Activated CD4-positive, alpha-beta T cell treated with anti-CD3 and anti-CD28 coated beads, Interleukin-2, amount 10 ng/mL, durations not matched to agents 7 days and 5 days (primary cell): ENCODE measurements at regions of chr2 and their contacts with region 1.

Region 1: DNA sequence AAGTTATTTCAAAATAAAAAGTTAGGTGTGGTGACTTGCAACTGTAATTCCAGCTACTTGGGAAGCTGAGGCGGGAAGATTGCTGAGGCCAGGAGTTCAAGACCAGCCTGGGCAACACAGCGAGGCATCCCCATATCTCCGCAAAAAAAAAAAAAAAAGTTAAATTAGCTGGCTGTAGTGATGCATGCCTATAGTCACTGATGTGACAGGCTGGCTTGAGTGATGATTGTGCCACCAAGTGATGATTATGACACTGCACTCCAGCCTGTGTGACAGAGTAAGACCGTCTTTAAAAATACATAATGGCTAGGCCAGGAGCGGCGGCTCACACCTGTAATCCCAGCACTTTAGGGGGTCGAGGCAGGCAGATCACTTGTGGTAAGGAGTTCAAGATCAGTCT is 11.5 kb downstream of the SMPD4 start:
- DNase-seq: no peak
- H3K4me3 Mint-ChIP-seq: no peak overlapping the region
- H3K27ac Mint-ChIP-seq: peak overlapping the region; percentile 31
- H3K4me1 Mint-ChIP-seq: peaks cover 16% of the 10 kb centered on the region
- H3K27me3 Mint-ChIP-seq: no peaks in the 10 kb centered on the region

Region 2: DNA sequence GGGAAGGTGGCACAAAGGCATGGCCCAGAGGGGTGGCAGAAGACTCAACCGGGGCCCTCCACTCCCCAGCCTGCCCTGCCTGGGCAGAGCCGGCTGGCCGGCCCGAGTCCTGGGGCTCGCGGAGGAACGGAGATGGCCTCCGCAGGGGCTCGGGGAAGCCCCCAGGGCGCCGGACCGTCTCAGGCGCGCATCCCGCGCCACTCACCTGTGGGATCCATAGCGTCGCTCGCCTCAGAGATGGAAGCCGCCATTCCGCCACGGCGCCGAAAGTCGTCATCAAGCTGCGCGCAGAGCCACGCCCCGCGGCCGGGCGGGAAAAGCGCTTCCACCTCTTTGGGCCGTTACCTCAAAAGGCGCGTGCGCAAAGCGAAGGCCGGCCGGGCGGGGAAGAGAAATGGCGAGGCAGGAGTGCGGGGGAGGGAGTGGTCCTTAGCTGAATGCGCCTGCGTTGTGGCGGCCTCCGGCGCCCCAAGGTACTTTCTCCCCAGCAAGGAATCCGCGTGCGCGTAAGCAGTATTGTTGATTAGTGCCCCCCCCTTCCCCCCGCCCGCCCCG is 11.5 kb after region 1 on chr2 and contains the start of gene SMPD4:
- CTCF ChIA-PET with region 1: interaction called, 27 read pairs
- POLR2A ChIA-PET with region 1: no interaction called
- DNase-seq: peak; percentile 96
- H3K4me3 Mint-ChIP-seq: peak within 1 kb of the TSS; percentile 91
- H3K27ac Mint-ChIP-seq: peak within 1 kb of the TSS; percentile 99
- H3K4me1 Mint-ChIP-seq: peaks cover 28% of the 10 kb centered on the region
- H3K27me3 Mint-ChIP-seq: no peaks in the 10 kb centered on the region
- total RNA-seq, gene SMPD4: 70.9 to 71.3 TPM

Region 3: GRCh38 chr2:130231656-130232055 is 61.8 kb after region 1 on chr2:
- CTCF ChIA-PET with region 1: no interaction called
- POLR2A ChIA-PET with region 1: no interaction called
- DNase-seq: no peak
- H3K4me3 Mint-ChIP-seq: no peak overlapping the region
- H3K27ac Mint-ChIP-seq: no peak overlapping the region
- H3K4me1 Mint-ChIP-seq: no peaks in the 10 kb centered on the region
- H3K27me3 Mint-ChIP-seq: peaks cover 6% of the 10 kb centered on the region

Region 4: DNA sequence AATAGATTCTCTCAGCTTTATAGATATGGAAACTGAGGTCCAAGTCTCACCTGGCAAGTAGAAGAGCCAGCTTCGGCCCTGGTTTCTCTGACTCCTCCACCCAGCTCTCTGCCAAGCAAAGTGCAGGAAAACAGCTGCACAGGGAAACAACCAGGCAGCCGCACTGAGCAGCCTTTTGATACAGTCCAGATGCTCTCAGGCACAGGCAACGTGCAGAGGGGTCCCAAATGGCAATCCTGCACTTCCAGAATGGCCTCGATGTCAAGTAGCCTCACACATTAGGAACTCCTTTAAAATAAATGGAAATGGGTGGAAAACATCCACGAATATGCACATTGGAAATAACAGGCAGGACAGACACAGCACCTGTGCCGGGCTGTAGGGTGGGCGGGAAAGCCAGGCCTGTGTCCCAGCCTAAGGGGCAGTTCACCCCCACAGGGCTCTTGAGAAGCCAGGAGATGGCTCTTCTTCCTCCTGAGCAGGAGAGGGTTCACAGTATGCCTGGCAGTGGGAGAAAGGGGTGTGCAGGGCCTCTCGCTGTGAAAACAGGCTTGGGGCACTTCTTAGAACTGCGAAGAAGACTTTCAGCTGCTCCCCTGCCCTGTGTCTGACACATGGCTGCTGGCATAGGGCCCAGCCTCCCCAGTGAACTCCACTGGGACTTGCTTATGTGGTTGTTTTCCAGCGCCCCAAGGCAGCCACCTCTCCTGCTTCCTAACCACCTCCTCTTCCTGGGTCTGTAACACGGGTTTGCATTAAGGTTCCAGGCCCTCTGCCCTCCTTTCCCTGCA is 92.3 kb after region 1 on chr2:
- CTCF ChIA-PET with region 1: no interaction called
- POLR2A ChIA-PET with region 1: no interaction called
- DNase-seq: no peak
- H3K4me3 Mint-ChIP-seq: no peak overlapping the region
- H3K27ac Mint-ChIP-seq: no peak overlapping the region
- H3K4me1 Mint-ChIP-seq: no peaks in the 10 kb centered on the region
- H3K27me3 Mint-ChIP-seq: peaks cover 14% of the 10 kb centered on the region